ENCODE measurements at regions of chr2 and their contacts with region 1.

Region 1: DNA sequence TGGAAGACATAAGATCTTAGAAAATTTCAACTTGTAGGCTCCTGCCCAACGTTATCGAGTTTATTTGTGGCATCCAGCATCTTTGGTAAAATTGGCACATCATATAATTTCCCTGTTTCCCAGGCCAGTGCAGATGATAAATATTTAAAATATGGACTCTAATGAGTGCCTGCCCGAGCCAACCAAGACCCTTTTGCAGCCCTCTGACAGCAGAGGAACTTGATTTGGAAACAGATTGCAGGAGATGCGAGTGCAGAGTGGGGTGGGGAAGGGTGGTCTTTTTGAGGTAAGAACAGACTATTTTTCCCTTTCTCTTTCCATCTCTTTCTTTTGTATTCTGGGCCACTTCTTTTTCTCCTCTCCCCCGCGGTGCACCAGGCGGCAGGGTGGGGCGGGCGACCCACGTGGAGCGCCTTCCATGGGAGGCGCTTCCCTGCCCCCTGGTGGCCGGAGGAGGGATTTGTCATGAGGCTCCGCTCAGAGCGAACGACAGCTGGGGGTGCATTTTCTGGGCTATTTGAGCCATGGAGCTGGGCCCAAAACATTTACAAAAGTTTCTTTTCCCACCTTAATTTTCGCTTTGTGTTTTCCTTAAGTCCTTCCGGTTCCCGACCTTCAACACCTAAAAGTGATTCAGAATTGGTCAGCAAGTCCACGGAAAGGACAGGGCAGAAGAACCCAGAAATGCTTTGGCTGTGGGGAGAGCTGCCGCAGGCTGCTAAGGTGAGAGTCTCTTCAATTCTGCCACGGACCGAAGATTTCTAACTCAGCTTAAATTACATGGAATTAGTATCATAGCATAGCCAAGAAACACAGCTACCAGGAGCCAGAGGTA is 32.7 kb downstream of the LPIN1 start:
- DNase-seq: peak; percentile 66 to 88 (median 83)
- ATAC-seq: peak; percentile 98
- H3K4me3 ChIP-seq: peak overlapping the region; percentile 32
- H3K4me3 Mint-ChIP-seq: peak overlapping the region; percentile 53 to 80 (median 71)
- H3K27ac ChIP-seq: no peak overlapping the region
- H3K27ac Mint-ChIP-seq: peak overlapping the region; percentile 0 to 88 (median 73)
- H3K4me1 ChIP-seq: peaks cover 13 to 15% of the 10 kb centered on the region in 2 donors
- H3K4me1 Mint-ChIP-seq: peaks cover 23 to 51% (median 41%) of the 10 kb centered on the region in 7 donors
- H3K27me3 ChIP-seq: no peaks in the 10 kb centered on the region
- H3K27me3 Mint-ChIP-seq: no peaks in the 10 kb centered on the region

Region 2: GRCh38 chr2:11344342-11344955 is 434.7 kb before region 1 on chr2 and contains the start of gene ROCK2:
- CTCF ChIA-PET with region 1: no interaction called
- POLR2A ChIA-PET with region 1: no interaction called
- intact Hi-C with region 1: loop called in 1 of 2 experiments (anchors 10 kb)
- DNase-seq: peak; percentile 45 to 81 (median 58)
- ATAC-seq: peak; percentile 82
- H3K4me3 ChIP-seq: peak within 1 kb of the TSS; percentile 87
- H3K4me3 Mint-ChIP-seq: peak within 1 kb of the TSS; percentile 93 to 100 (median 98)
- H3K27ac ChIP-seq: peak within 1 kb of the TSS; percentile 76
- H3K27ac Mint-ChIP-seq: peak within 1 kb of the TSS; percentile 87 to 96 (median 91)
- H3K4me1 ChIP-seq: peaks cover 13% of the 10 kb centered on the region in 2 donors
- H3K4me1 Mint-ChIP-seq: peaks cover 18 to 43% (median 33%) of the 10 kb centered on the region in 7 donors
- H3K27me3 ChIP-seq: no peaks in the 10 kb centered on the region
- H3K27me3 Mint-ChIP-seq: peaks cover 0 to 25% (median 0%) of the 10 kb centered on the region in 5 donors
- total RNA-seq, gene ROCK2: 12.0 to 23.9 (median 18.8) TPM

Region 3: DNA sequence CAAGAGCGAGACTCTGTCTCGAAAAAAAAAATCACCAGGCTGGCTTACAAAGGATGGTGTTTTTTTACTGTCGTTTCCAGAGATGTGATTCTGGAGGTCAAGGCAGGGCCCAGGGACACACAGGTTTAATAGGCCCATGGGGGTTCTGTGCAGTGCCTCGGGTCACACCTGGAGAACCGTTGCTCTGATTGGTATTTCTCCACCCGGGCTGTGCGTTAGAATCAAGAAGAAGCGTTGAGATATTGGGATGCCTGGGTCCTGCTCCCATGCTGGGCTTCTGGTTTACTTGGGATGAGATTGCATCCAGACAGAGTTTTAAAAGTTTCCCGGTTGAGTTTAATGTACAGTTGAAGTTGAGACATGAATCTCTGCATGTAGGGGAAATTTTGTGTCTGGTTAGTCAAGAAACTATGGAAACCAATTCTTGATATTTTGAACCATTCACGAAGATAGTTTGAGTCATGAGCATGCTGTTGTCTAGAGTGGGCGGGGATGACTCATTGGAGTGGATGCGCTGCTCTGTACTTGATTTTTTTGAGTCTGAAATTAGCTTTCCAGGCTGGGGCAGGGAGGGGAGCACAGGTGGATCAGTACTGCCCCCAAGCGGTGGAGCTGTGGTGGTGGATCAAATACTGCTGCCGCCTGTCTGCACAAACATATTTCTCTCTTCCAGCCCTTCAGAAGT is 195.2 kb before region 1 on chr2:
- CTCF ChIA-PET with region 1: no interaction called
- POLR2A ChIA-PET with region 1: no interaction called
- intact Hi-C with region 1: loop called (anchors 2 to 10 kb)
- DNase-seq: peak; percentile 12 to 86 (median 34)
- ATAC-seq: peak; percentile 79
- H3K4me3 ChIP-seq: no peak overlapping the region
- H3K4me3 Mint-ChIP-seq: no peak overlapping the region
- H3K27ac ChIP-seq: no peak overlapping the region
- H3K27ac Mint-ChIP-seq: no peak overlapping the region
- H3K4me1 ChIP-seq: no peaks in the 10 kb centered on the region
- H3K4me1 Mint-ChIP-seq: peaks cover 0 to 7% (median 3%) of the 10 kb centered on the region in 7 donors
- H3K27me3 ChIP-seq: peaks cover 0 to 3% of the 10 kb centered on the region in 2 donors
- H3K27me3 Mint-ChIP-seq: peaks cover 0 to 4% (median 0%) of the 10 kb centered on the region in 5 donors

Region 4: GRCh38 chr2:11688222-11689069 is 90.7 kb before region 1 on chr2:
- CTCF ChIA-PET with region 1: interaction called, 110 read pairs
- POLR2A ChIA-PET with region 1: interaction called, 4 read pairs
- intact Hi-C with region 1: loop called (anchors 1 kb)
- DNase-seq: peak; percentile 62 to 82 (median 72)
- ATAC-seq: peak; percentile 93
- H3K4me3 ChIP-seq: peak overlapping the region; percentile 25
- H3K4me3 Mint-ChIP-seq: peak overlapping the region; percentile 25 to 73 (median 54)
- H3K27ac ChIP-seq: no peak overlapping the region
- H3K27ac Mint-ChIP-seq: peak overlapping the region in 2 of 9 donors; percentile 38 to 77
- H3K4me1 ChIP-seq: peaks cover 3 to 7% of the 10 kb centered on the region in 2 donors
- H3K4me1 Mint-ChIP-seq: peaks cover 7 to 19% (median 13%) of the 10 kb centered on the region in 7 donors
- H3K27me3 ChIP-seq: no peaks in the 10 kb centered on the region
- H3K27me3 Mint-ChIP-seq: peaks cover 0 to 21% (median 5%) of the 10 kb centered on the region in 5 donors

Region 5: DNA sequence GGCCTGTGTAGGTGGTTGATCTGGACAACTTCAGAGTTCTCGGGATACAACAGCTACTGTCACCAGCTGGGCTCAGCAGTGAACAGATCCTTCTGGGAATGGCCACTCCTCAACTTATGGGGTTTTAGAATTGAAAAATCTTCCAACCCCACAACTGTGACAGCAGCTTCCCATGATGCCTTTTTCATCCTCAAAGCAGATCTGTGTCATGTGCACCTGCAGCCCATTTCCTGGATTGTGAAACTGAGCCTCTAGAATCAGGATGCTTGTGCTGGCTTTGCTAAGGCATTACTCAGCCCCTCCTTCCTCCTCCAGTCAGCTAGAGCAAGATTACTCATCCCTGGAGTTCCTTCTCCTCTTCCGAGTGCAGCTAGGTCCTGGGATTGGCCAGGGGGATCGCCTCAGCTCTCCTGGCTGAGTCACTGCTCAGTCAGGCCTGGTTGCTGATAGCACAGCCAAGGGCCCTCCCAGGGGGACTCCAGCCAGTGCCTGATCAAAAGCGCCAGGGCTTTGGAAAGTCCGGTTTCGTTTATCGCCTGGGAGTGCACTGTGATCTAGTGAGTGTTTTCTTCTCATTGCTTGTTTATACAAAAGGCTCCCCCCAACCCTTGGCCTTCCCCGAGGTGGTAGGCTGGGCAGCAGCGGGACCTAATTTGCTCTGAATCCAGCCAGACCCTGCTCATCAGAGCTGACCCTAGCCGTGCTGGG is 35.1 kb before region 1 on chr2:
- CTCF ChIA-PET with region 1: interaction called, 14 read pairs
- POLR2A ChIA-PET with region 1: interaction called, 9 read pairs
- intact Hi-C with region 1: loop called (anchors 1 kb)
- DNase-seq: peak in 1 of 9 donors; percentile 80
- ATAC-seq: peak; percentile 64
- H3K4me3 ChIP-seq: peak overlapping the region; percentile 35
- H3K4me3 Mint-ChIP-seq: peak overlapping the region in 7 of 10 donors; percentile 38 to 81 (median 65)
- H3K27ac ChIP-seq: no peak overlapping the region
- H3K27ac Mint-ChIP-seq: peak overlapping the region in 4 of 9 donors; percentile 22 to 97 (median 62)
- H3K4me1 ChIP-seq: peaks cover 33 to 41% of the 10 kb centered on the region in 2 donors
- H3K4me1 Mint-ChIP-seq: peaks cover 18 to 50% (median 45%) of the 10 kb centered on the region in 7 donors
- H3K27me3 ChIP-seq: no peaks in the 10 kb centered on the region
- H3K27me3 Mint-ChIP-seq: no peaks in the 10 kb centered on the region

Region 6: DNA sequence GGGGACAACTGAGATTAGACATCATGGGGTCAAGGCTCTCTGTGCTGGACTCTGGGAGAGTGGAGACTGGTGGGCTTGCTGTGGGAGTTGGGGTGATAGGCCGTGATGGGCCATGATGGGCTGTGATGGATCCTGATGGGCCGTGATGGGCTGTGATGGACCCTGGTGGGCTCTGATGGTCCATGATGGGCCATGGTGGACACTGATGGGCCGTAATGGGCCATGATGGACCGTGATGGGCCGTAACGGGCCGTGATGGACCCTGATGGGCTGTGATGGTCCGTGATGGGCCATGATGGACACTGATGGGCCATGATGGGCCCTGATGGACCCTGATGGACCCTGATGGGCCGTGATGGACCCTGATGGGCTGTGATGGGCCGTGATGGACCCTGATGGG is 14.2 kb before region 1 on chr2:
- CTCF ChIA-PET with region 1: interaction called, 11 read pairs
- POLR2A ChIA-PET with region 1: no interaction called
- intact Hi-C with region 1: no loop called
- DNase-seq: no peak
- ATAC-seq: no peak
- H3K4me3 ChIP-seq: no peak overlapping the region
- H3K4me3 Mint-ChIP-seq: no peak overlapping the region
- H3K27ac ChIP-seq: no peak overlapping the region
- H3K27ac Mint-ChIP-seq: peak overlapping the region in 4 of 9 donors; percentile 14 to 59 (median 35)
- H3K4me1 ChIP-seq: peaks cover 3 to 4% of the 10 kb centered on the region in 2 donors
- H3K4me1 Mint-ChIP-seq: peaks cover 26 to 43% (median 37%) of the 10 kb centered on the region in 7 donors
- H3K27me3 ChIP-seq: no peaks in the 10 kb centered on the region
- H3K27me3 Mint-ChIP-seq: no peaks in the 10 kb centered on the region

Region 7: DNA sequence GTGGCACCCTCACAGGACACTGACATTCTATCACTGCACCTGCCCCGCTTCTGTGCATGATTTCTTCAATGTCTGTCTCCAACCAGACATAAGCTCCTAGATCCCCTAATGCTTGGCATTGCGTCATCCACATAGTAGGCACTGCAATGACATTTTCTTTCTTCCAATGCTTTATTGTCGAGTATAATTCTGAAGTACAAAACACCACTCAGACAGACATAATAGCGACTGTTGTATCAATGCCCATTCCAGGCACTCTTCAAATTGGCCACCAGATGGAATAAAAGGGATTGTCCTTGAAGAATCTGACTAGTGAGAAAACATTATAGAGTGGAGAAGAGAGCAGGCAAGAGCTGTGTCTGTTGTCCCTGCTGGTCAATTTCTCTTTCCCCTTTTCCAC is 56.3 kb after region 1 on chr2:
- CTCF ChIA-PET with region 1: no interaction called
- POLR2A ChIA-PET with region 1: no interaction called
- intact Hi-C with region 1: no loop called
- DNase-seq: no peak
- ATAC-seq: no peak
- H3K4me3 ChIP-seq: no peak overlapping the region
- H3K4me3 Mint-ChIP-seq: no peak overlapping the region
- H3K27ac ChIP-seq: no peak overlapping the region
- H3K27ac Mint-ChIP-seq: peak overlapping the region in 1 of 9 donors; percentile 10
- H3K4me1 ChIP-seq: peaks cover 4 to 8% of the 10 kb centered on the region in 2 donors
- H3K4me1 Mint-ChIP-seq: peaks cover 10 to 30% (median 16%) of the 10 kb centered on the region in 7 donors
- H3K27me3 ChIP-seq: no peaks in the 10 kb centered on the region
- H3K27me3 Mint-ChIP-seq: peaks cover 0 to 82% (median 0%) of the 10 kb centered on the region in 5 donors